ENCODE measurements at regions of chr1 and their contacts with region 1.

Region 1: DNA sequence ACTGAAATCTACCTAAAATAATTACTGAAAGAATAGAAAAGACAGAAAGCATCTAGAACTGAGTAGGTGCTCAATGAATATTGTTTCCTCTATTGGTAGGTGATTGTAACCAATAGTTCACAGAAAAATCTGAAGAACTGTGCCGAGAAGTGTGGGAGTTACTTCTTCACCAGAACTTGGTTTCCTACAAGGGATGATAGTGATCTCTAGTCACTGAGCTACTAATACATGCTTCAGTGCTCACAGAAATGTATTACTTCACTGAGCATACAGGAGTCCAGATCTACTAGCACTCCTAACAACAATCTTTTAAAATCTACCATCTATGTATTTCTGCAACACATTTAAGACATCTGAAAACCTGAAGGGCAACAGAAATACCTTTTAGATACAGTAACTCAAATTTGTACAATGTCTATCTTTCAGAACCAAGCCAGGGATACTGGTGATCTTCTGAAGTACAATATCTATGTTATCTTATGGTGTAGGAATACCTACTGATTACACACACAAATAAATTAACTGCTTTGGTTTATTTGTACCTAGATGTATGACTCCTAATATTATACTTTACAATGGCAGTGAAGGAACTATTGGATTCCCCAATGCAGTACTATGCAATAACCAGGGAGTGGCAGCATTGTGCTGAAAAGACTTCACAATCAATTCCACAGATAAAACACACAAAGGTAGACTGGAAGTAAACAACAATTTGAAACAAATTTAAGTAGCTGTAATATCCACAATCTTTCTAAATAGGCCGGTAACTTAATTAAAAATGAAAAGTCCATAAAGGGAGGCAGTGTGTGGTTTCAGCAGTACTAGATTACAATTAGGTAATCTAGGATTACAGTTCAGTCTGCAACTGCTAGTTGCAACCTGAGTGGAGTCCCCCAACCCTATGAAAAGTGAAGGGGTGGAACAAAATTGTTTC is 243.0 kb downstream of the SLC45A1 start:
- DNase-seq: peak; percentile 36
- CTCF ChIP-seq: peak; percentile 75

Region 2: DNA sequence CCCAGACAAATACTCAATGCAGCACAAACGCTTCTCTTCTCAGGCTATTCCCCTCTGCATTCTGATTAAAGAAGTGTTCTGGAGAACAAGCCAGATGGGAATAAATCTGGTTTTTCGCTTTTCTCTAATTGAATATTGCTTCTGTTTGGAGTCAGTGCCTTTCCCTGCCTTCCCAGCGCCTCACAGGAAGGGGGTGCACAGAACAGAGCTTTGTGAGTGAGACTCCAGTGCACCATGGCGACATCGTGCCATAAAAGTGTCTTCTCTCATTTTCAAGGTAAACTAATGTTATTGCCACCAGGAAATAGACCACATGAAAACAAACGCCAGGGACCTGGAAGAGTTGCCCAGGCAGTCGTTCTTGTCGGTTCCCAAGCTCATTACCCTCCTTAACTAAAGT is 286.5 kb before region 1 on chr1:
- in situ Hi-C with region 1: no loop called
- DNase-seq: no peak
- CTCF ChIP-seq: no peak

Region 3: GRCh38 chr1:8660411-8660828 is 99.5 kb after region 1 on chr1:
- in situ Hi-C with region 1: loop called (anchors 10 kb)
- DNase-seq: no peak
- CTCF ChIP-seq: no peak

Region 4: DNA sequence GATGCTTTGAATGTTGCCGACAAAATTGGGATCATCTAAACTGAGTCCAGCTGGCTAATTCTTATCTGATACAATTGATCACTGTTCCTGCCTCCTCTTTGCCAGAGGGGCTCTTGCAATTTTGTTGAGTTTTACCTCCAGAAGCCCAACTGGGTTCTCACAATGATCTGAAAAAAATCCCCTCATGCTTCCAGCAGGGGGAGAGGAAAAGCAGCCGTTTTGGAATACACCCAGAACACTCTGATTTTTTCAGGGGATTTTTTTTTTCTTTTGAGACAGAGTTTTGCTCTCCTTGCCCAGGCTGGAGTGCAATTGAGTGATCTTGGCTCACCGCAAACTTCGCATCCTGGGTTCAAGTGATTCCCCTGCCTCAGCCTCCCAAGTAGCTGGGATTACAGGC is 270.5 kb after region 1 on chr1:
- in situ Hi-C with region 1: loop called (anchors 10 kb)
- DNase-seq: no peak
- CTCF ChIP-seq: no peak

Region 5: DNA sequence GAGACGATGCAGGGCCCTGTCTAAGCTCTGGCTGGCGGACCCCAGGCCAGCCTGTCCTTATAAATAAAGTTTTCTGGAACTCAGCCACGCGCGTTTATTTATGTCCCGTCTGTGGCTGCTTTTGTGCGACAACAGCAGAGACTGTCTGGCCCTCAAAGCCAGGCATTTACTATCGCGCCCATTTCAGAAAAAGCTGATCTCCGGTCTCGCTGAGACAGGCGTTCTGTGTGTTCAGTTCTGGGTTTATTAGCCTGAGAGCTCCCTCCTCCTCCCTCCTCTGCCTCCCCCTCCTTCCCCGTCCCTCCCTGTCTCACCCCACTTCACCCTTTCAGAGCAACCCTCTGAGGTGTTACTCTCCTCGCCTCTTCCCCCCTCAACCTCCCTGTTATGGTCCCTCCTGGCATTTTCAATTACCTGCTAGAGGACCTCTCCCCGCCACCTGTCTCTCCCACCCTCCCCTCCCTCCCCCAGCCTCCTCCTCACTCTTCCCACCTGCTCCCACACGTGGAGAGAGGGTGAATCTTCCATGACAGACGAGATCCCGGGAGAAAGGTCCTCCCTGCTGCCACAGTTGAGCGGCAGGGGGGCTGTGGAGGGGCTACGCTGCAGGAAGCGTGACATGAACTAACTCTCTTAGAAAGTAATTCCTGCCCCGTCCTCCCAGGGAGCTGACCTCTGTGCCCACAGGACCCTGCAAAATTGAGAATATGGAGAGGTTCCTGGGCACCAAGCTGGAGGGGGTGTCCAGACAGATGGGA is 791.7 kb after region 1 on chr1:
- in situ Hi-C with region 1: no loop called
- DNase-seq: no peak
- CTCF ChIP-seq: peak; percentile 14

Measured in GM13977 (cell line).